Gastrocnemius medialis (tissue), 4 donors: ENCODE measurements at regions of chr1 and their contacts with region 1.

Region 1: GRCh38 chr1:184892116-184892515 is 82.2 kb downstream of the NIBAN1 start:
- DNase-seq: no peak
- ATAC-seq: no peak
- H3K4me3 ChIP-seq: no peak overlapping the region
- H3K27ac ChIP-seq: peak overlapping the region in 3 of 4 donors; percentile 5 to 57 (median 27)
- H3K4me1 ChIP-seq: peaks cover 32 to 53% of the 10 kb centered on the region in 2 donors
- H3K27me3 ChIP-seq: no peaks in the 10 kb centered on the region
- CTCF ChIP-seq: no peak
- POLR2A ChIP-seq: no peak

Region 2: GRCh38 chr1:184555665-184556641 is 336.2 kb before region 1 on chr1:
- in situ Hi-C with region 1: no loop called
- intact Hi-C with region 1: no loop called
- DNase-seq: peak; percentile 52 to 67
- ATAC-seq: peak; percentile 81 to 82
- H3K4me3 ChIP-seq: no peak overlapping the region
- H3K27ac ChIP-seq: peak overlapping the region; percentile 91 to 97 (median 95)
- H3K4me1 ChIP-seq: peaks cover 40 to 69% of the 10 kb centered on the region in 2 donors
- H3K27me3 ChIP-seq: no peaks in the 10 kb centered on the region
- CTCF ChIP-seq: no peak
- POLR2A ChIP-seq: peak in 1 of 2 donors; percentile 12

Region 3: DNA sequence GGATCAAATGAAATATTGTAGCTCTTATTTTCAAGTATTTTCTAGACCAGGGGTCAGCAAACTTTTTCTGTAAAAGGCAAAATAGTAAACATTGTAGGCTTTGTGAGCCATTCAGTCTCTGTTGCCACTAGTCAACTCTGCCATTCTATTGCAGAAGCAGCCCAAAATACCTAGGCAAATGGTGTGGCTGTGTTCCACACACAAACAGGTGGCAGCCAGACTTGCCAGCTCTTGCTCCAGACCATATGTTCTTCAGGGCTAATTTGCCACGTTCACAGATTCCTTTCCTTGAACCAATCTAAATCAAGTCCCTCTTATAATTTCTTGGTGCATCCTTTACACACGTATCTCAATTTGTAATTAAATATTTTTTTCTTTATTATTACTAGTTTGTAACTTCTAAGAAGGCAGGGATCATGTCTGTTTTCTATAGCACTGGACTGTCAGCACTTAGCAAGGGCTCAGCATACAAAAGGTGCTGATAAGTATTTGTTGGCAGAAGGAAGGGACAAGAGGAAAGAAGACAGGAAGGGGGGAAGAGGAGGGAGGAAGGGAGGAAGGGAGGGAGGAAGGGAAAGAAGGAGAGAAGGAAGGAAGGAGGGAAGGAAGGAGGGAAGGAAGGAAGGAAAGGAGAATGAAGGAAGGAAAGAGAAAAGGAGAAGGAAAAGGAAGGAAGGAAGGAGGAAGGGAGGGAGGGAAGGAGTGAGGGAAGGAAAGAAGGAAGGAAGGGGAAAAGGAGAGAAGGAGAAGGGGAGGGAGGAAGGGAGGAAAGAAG is 30.9 kb before region 1 on chr1:
- in situ Hi-C with region 1: no loop called
- intact Hi-C with region 1: no loop called
- DNase-seq: peak; percentile 74 to 86
- ATAC-seq: peak; percentile 99 to 100
- H3K4me3 ChIP-seq: no peak overlapping the region
- H3K27ac ChIP-seq: peak overlapping the region; percentile 68 to 82 (median 78)
- H3K4me1 ChIP-seq: peaks cover 26 to 31% of the 10 kb centered on the region in 2 donors
- H3K27me3 ChIP-seq: no peaks in the 10 kb centered on the region
- CTCF ChIP-seq: no peak
- POLR2A ChIP-seq: no peak

Region 4: GRCh38 chr1:184879876-184880557 is 12.1 kb before region 1 on chr1:
- in situ Hi-C with region 1: no loop called
- intact Hi-C with region 1: loop called (anchors 1 kb)
- DNase-seq: no peak
- ATAC-seq: no peak
- H3K4me3 ChIP-seq: no peak overlapping the region
- H3K27ac ChIP-seq: peak overlapping the region in 2 of 4 donors; percentile 6 to 19
- H3K4me1 ChIP-seq: peaks cover 26 to 31% of the 10 kb centered on the region in 2 donors
- H3K27me3 ChIP-seq: no peaks in the 10 kb centered on the region
- CTCF ChIP-seq: no peak
- POLR2A ChIP-seq: no peak

Region 5: DNA sequence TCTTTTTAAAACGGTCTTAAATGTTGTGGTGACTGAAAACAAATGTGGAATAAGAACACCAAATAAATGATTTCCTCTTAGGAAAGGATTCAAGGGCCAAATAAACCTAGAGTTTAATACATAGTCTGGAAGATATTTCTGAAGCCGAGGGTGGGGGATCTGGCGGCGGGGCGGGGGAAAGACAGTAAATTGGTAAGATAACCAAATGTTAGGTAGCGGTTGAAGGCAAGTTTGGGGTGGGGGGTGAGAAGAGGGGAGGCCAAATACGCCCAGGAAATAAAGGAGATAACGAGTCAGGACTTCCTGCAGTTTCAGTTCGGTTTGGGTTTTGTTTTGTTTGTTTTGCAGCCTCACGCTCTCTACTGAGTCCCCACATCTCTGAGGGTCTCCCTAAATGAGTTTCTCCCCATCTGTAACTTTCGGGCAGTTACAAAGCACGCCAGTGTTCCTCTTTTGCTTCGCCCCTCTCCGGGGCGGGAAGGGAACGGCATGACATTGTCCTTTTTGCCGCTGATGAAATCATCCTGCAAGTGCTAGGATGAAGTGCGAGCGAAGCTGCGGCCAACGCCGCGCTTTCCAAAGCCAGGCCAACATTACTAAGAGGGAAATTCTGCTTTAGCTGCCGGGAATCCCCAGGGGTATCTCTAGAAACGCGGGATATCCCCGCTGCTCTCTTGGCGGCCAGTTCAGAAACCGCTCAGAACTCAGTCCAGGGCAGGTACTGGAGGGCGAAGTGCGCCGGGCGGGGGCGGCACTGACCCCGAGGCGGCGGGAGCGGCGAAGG is 81.3 kb after region 1 on chr1:
- in situ Hi-C with region 1: no loop called
- intact Hi-C with region 1: loop called (anchors 2 kb)
- DNase-seq: peak in 1 of 2 donors; percentile 37
- ATAC-seq: peak; percentile 60 to 79
- H3K4me3 ChIP-seq: peak overlapping the region; percentile 63 to 80 (median 65)
- H3K27ac ChIP-seq: peak overlapping the region; percentile 71 to 81 (median 75)
- H3K4me1 ChIP-seq: peaks cover 0 to 10% of the 10 kb centered on the region in 2 donors
- H3K27me3 ChIP-seq: no peaks in the 10 kb centered on the region
- CTCF ChIP-seq: no peak
- POLR2A ChIP-seq: no peak

Region 6: DNA sequence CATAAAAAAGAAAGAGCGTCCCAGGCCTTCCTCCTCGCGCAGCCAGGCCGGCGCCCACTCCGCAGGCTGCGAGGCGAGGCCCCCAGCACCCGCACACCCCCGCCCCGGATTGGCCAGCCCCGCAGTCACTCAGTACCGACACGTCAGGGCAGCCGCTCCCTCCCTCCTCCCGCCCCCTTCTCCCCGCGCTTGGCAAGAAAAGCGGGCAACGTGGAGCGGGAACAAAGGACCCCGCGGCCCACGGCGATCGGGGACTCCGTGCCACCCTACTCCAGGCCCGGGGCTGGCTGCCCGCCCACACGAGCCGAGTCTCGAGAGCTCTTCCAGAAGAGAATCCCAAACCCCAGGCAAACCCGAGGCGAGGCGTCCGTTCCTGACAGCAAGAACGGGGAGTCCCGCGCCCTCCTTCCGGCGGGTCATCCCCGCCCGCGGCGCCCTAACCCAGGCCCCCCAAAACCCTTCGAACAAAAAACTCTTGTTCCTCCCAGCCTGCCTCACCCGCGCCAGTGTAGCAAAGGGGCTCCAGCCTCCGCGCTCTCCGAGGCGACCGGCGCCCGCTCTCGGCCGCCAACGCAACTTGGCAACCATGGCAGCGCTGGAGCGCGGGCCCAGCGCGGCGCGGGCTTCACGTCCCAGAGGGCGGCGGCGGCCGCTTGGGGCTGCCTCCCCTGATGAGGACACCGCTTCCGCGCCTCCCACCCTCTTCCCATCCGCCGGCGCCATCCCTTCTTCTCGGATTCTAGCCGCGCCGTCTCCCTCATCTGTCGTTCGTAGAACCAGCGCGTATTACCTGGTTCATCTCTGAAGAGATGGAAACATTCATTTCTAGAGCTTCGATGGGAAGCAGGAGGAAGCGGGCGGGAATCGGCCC is 424.3 kb after region 1 on chr1:
- in situ Hi-C with region 1: no loop called
- intact Hi-C with region 1: no loop called
- DNase-seq: peak; percentile 89 to 92
- ATAC-seq: peak; percentile 66 to 69
- H3K4me3 ChIP-seq: peak overlapping the region; percentile 75 to 95 (median 82)
- H3K27ac ChIP-seq: peak overlapping the region; percentile 94 to 99 (median 98)
- H3K4me1 ChIP-seq: peaks cover 32 to 55% of the 10 kb centered on the region in 2 donors
- H3K27me3 ChIP-seq: no peaks in the 10 kb centered on the region
- CTCF ChIP-seq: no peak
- POLR2A ChIP-seq: peak; percentile 55 to 68

Region 7: GRCh38 chr1:185367218-185367617 is 475.1 kb after region 1 on chr1:
- in situ Hi-C with region 1: no loop called
- intact Hi-C with region 1: no loop called
- DNase-seq: no peak
- ATAC-seq: no peak
- H3K4me3 ChIP-seq: no peak overlapping the region
- H3K27ac ChIP-seq: no peak overlapping the region
- H3K4me1 ChIP-seq: no peaks in the 10 kb centered on the region
- H3K27me3 ChIP-seq: no peaks in the 10 kb centered on the region
- CTCF ChIP-seq: no peak
- POLR2A ChIP-seq: no peak